ENCODE measurements at regions of chr12 and their contacts with region 1.

Region 1: DNA sequence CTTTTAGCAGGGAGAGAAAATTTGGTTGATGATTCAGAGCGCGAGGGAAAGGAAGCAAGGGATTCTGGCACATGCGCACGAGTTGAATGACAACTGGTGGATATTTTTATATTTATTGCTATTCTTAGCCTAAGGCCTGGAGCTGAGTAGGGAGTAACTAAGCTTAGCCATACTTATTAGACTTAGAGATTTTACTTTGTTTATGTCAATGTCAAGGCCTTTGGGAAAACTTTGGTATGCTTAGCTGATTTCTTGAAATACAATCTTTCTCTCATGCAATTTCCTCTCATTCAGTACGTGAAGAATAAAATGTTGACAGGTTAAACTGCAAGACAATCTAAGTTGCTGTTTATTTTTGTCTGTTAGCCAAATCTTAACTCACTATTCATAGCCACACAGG is 101.1 kb downstream of the CRADD start:
- DNase-seq: no peak
- H3K4me3 ChIP-seq: no peak overlapping the region
- H3K27ac ChIP-seq: no peak overlapping the region
- H3K4me1 ChIP-seq: peaks cover 11% of the 10 kb centered on the region
- H3K27me3 ChIP-seq: no peaks in the 10 kb centered on the region
- CTCF ChIP-seq: no peak

Region 2: DNA sequence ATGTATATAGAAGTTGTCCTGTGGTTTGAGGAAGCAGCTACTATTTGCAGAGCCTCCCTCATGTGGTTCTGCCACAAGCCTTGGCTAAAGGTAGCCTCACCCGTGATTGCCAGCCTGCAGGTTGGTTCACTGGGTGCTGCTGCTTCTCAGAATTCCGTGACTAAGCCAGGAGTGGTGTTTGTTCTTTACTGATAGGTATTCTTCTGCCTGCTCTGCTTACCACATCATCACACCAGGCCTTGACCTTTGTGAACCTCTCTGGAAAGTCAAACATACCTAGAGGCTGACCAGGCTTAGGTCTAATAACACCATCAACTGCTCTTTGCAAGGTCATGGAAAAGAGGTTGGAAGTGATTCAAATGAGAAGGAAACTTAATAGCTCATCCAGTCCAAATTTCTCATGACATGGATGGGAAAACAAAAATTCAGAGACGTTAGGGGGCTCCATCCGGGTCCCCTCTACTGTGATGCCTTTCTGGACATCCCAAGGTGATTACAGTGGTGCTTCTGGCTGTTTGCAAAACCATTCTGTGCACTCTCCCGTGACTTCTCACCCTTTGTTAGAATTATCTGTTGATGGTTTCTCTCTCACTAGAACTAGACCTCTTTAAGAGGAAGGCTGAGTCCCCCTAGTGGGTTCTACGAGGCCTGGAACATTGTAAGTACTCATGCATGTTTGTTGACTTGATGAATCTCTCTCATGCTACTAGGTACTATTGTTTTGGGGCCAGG is 214.3 kb before region 1 on chr12:
- CTCF ChIA-PET with region 1: no interaction called
- dilution Hi-C with region 1: no loop called
- in situ Hi-C with region 1: no loop called
- intact Hi-C with region 1: no loop called
- DNase-seq: peak; percentile 71
- H3K4me3 ChIP-seq: no peak overlapping the region
- H3K27ac ChIP-seq: no peak overlapping the region
- H3K4me1 ChIP-seq: no peaks in the 10 kb centered on the region
- H3K27me3 ChIP-seq: no peaks in the 10 kb centered on the region
- CTCF ChIP-seq: no peak

Region 3: GRCh38 chr12:93742110-93742934 is 36.0 kb before region 1 on chr12:
- CTCF ChIA-PET with region 1: no interaction called
- dilution Hi-C with region 1: no loop called
- in situ Hi-C with region 1: no loop called
- intact Hi-C with region 1: no loop called
- DNase-seq: peak; percentile 65
- H3K4me3 ChIP-seq: peak overlapping the region; percentile 55 to 74 (median 60)
- H3K27ac ChIP-seq: peak overlapping the region; percentile 81
- H3K4me1 ChIP-seq: peaks cover 16% of the 10 kb centered on the region
- H3K27me3 ChIP-seq: no peaks in the 10 kb centered on the region
- CTCF ChIP-seq: peak; percentile 12 to 48

Region 4: GRCh38 chr12:93839064-93839463 is 60.8 kb after region 1 on chr12:
- CTCF ChIA-PET with region 1: no interaction called
- dilution Hi-C with region 1: no loop called
- in situ Hi-C with region 1: no loop called
- intact Hi-C with region 1: loop called (anchors 5 kb)
- DNase-seq: no peak
- H3K4me3 ChIP-seq: no peak overlapping the region
- H3K27ac ChIP-seq: no peak overlapping the region
- H3K4me1 ChIP-seq: no peaks in the 10 kb centered on the region
- H3K27me3 ChIP-seq: no peaks in the 10 kb centered on the region
- CTCF ChIP-seq: peak in 1 of 2 donors; percentile 4